ENCODE measurements at regions of chr6 and their contacts with region 1.

Region 1: DNA sequence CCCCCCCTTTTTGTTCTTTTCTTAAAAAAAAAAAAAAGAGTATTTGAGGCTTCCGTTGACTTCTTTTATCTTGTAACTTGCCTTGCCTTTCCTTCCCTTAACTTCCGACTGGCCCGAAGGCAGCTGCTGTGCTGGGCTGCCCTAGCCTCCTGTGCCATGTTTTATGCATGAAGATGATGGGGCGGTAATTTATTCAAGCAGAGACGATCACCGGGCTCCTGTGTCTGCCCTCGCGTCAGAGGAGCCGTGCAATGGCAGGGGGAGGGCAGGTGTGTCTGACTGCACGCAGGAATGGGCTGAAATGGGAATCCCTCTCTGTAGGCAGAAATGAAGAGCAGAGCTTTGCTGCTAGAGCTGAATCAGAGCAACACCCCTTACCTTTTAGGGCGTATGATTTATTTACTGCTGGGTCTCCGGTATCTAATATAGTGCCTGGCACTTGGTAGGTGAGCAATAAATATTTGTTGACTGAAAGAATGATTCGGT is 106.3 kb upstream of the RIPOR2 start:
- DNase-seq: peak in 2 of 3 donors; percentile 76 to 86
- H3K4me3 ChIP-seq: peak overlapping the region; percentile 42 to 96 (median 89)
- H3K27ac ChIP-seq: peak overlapping the region; percentile 97
- H3K4me1 ChIP-seq: peaks cover 28 to 61% (median 42%) of the 10 kb centered on the region in 4 experiments
- H3K27me3 ChIP-seq: no peaks in the 10 kb centered on the region

Region 2: DNA sequence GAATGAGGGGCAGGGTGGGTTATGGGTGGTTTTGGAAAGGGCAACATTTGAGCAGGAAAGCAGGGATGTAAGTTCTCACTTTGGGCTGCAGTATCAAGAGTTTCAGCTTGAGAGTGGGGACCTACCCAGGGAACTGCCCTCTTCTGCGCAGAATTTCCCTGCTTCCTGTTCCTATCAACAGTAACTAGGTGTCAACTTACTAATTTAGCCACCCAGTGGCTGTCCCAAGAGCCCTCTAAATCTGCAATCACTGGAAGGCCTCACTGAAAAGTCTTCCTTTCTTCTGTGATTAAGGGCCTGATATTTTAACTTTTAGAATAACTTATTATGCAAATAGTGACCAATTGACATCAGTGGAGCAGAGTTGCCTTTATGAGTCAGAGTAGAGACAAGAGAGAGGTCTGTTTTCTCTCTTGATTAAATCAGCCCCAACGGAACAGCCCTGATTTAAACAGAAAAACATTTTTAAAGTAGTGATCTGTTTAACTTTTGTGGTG is 11.8 kb after region 1 on chr6:
- CTCF ChIA-PET with region 1: interaction called, 63 read pairs
- POLR2A ChIA-PET with region 1: interaction called, 4 read pairs
- DNase-seq: peak in 2 of 3 donors; percentile 71 to 77
- H3K4me3 ChIP-seq: peak overlapping the region in 2 of 7 experiments; percentile 4 to 23
- H3K27ac ChIP-seq: no peak overlapping the region
- H3K4me1 ChIP-seq: peaks cover 47 to 94% (median 83%) of the 10 kb centered on the region in 4 experiments
- H3K27me3 ChIP-seq: no peaks in the 10 kb centered on the region

Region 3: DNA sequence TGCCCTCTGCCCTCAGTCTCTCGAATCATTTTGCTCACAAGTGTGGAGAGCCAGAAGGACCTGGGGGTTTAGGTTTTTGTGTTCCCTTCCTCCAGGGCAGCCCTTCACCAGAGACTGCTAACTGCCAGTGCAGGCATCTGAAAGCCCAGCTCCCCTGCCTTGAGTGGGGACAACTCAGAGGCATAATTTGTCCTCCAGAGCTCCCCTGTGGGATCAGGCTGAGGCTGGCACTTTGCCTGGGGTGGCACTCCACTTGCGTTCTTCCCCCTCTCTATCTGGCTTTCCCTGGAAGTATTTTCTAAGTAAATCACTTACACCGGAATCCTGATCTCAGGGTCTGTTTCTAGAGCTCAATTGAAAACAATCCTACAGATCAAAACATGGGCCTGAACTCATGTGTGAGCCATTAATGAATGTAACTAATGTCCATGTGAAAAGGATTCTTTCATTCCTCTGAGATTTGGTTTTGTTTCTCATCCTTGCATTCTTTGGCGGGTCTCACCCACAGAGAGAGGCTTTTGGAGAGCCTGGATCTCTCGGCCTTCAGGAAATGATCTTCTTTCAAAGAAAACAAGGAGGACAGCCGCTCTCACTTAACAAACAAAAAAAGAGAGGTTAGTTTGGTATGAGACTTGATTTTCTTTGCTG is 19.3 kb after region 1 on chr6:
- CTCF ChIA-PET with region 1: interaction called, 63 read pairs
- POLR2A ChIA-PET with region 1: interaction called, 3 read pairs
- DNase-seq: no peak
- H3K4me3 ChIP-seq: no peak overlapping the region
- H3K27ac ChIP-seq: no peak overlapping the region
- H3K4me1 ChIP-seq: peaks cover 9 to 45% (median 26%) of the 10 kb centered on the region in 4 experiments
- H3K27me3 ChIP-seq: no peaks in the 10 kb centered on the region

Region 4: GRCh38 chr6:25070547-25071366 is 28.7 kb after region 1 on chr6:
- CTCF ChIA-PET with region 1: interaction called, 11 read pairs
- POLR2A ChIA-PET with region 1: interaction called, 3 read pairs
- DNase-seq: peak; percentile 88 to 94 (median 93)
- H3K4me3 ChIP-seq: peak overlapping the region in 1 of 7 experiments; percentile 42
- H3K27ac ChIP-seq: peak overlapping the region in 1 of 2 experiments; percentile 26
- H3K4me1 ChIP-seq: peaks cover 0 to 7% (median 1%) of the 10 kb centered on the region in 4 experiments
- H3K27me3 ChIP-seq: no peaks in the 10 kb centered on the region